ENCODE measurements at regions of chr11 and their contacts with region 1.

Region 1: DNA sequence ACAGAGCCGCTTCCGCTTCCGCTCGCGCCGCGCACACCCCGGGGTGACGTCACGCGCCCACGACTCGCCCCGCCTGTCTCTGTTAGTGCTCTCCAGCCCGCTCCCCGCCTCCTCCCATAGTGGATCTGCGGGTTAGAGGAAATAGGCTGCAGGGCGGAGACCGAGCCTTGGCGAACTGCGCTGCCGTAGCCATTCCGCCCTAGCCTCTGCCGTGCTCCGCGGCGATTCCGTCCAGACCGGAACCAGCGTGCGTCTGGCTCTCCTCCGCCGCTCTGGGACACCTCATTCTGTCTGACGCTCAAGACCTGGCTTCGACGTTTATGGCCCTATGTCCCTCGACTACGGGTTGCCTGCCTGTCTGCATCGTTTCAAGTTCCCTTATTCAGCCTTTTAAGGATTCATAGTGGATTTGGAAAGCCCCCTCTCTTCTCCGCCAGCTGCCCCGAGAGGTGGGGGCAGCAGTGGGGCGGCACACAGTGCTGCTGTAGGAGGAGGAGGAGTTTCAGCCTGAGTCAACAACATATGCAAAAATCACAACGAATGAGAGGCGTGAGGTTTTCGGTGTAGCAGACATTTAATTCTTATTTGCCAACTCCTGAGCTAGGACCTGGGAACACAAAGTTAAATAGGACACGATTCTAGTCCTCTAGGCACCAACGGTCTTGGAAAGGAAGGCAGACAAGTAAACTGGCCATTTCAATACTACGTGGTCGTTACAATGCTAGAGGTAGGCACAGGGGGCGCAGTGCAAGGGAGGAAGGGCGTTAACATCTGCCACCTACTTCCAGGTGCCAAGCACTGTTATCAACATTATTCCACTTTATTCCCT is at the start of gene TAF10:
- DNase-seq: peak; percentile 78
- H3K4me3 ChIP-seq: peak within 1 kb of the TSS; percentile 83 to 92 (median 90)
- H3K27ac ChIP-seq: peak within 1 kb of the TSS; percentile 93 to 99 (median 98)
- H3K4me1 ChIP-seq: peaks cover 13 to 62% (median 35%) of the 10 kb centered on the region in 3 donors
- H3K27me3 ChIP-seq: no peaks in the 10 kb centered on the region
- CTCF ChIP-seq: peak in 5 of 6 experiments; percentile 15 to 60 (median 37)
- POLR2A ChIP-seq: peak in 3 of 4 donors; percentile 72 to 98 (median 93)
- total RNA-seq, gene TAF10: 31.9 to 69.2 (median 48.6) TPM

Region 2: GRCh38 chr11:6481012-6481923 is 131.2 kb before region 1 on chr11 and contains the starts of genes ARFIP2 and TIMM10B:
- intact Hi-C with region 1: loop called (anchors 10 kb)
- DNase-seq: peak; percentile 92
- H3K4me3 ChIP-seq: peak within 1 kb of the TSS; percentile 62 to 91 (median 76)
- H3K27ac ChIP-seq: peak within 1 kb of the TSS; percentile 93 to 97 (median 94)
- H3K4me1 ChIP-seq: peaks cover 20 to 43% (median 21%) of the 10 kb centered on the region in 3 donors
- H3K27me3 ChIP-seq: no peaks in the 10 kb centered on the region
- CTCF ChIP-seq: peak in 1 of 6 experiments; percentile 4
- POLR2A ChIP-seq: peak in 2 of 4 donors; percentile 94 to 96
- total RNA-seq, gene ARFIP2: 39.4 to 74.6 (median 50.8) TPM
- total RNA-seq, gene TIMM10B: 17.0 to 40.2 (median 29.6) TPM

Measured in esophagus squamous epithelium (tissue), 5 donors.